Pancreas (tissue), 10 donors: ENCODE measurements at regions of chr13 and their contacts with region 1.

Region 1: GRCh38 chr13:75219479-75220237 is 262.3 kb downstream of the TBC1D4 start:
- DNase-seq: peak; percentile 37 to 97 (median 80)
- ATAC-seq: peak; percentile 90 to 100 (median 99)
- H3K4me3 ChIP-seq: peak overlapping the region in 1 of 4 donors; percentile 16
- H3K27ac ChIP-seq: no peak overlapping the region
- H3K4me1 ChIP-seq: no peaks in the 10 kb centered on the region
- H3K27me3 ChIP-seq: no peaks in the 10 kb centered on the region
- CTCF ChIP-seq: peak; percentile 77 to 96 (median 94)

Region 2: DNA sequence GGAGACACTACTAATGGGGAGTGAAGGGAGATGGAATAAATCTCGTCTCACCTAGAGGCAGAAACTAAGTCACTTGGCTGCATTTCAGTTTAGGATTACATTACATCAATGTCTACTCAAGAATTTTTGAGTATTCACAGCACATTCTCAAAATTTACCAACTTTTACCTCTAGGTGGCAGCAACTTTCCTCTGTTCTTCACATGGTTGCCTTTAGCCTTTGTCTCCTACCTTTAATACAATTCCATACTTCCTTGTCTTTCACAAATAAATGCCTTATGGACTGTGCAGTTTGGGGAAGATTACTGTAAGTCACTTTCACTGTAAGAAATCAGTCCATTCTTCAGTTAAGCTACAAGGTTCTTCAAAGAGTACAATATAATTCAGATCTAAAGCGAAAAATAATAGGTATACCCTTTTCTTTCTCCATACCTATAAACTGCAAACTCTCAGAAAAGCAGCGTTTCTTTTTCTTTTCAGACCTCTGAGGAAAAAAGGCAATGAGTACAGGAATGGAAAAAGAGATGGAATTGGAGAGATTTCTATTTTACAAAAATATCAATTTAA is 1464.8 kb before region 1 on chr13:
- intact Hi-C with region 1: loop called in 2 of 3 experiments (anchors 10 kb)
- DNase-seq: peak in 2 of 6 donors; percentile 2 to 18
- ATAC-seq: peak in 3 of 4 donors; percentile 84 to 89 (median 87)
- H3K4me3 ChIP-seq: no peak overlapping the region
- H3K27ac ChIP-seq: no peak overlapping the region
- H3K4me1 ChIP-seq: no peaks in the 10 kb centered on the region
- H3K27me3 ChIP-seq: no peaks in the 10 kb centered on the region
- CTCF ChIP-seq: peak; percentile 41 to 65 (median 53)

Region 3: GRCh38 chr13:75079226-75079625 is 140.4 kb before region 1 on chr13:
- intact Hi-C with region 1: no loop called
- DNase-seq: no peak
- ATAC-seq: peak in 1 of 4 donors; percentile 42
- H3K4me3 ChIP-seq: no peak overlapping the region
- H3K27ac ChIP-seq: no peak overlapping the region
- H3K4me1 ChIP-seq: no peaks in the 10 kb centered on the region
- H3K27me3 ChIP-seq: no peaks in the 10 kb centered on the region
- CTCF ChIP-seq: no peak

Region 4: GRCh38 chr13:75326173-75327134 is 106.8 kb after region 1 on chr13:
- intact Hi-C with region 1: no loop called
- DNase-seq: no peak
- ATAC-seq: peak in 3 of 4 donors; percentile 59 to 71 (median 66)
- H3K4me3 ChIP-seq: no peak overlapping the region
- H3K27ac ChIP-seq: peak overlapping the region in 2 of 4 donors; percentile 26 to 40
- H3K4me1 ChIP-seq: no peaks in the 10 kb centered on the region
- H3K27me3 ChIP-seq: no peaks in the 10 kb centered on the region
- CTCF ChIP-seq: no peak